ENCODE measurements at regions of chr5 and their contacts with region 1.

Region 1: GRCh38 chr5:26416911-26417310 is 621.5 kb downstream of the CDH9 start:
- DNase-seq: no peak
- H3K4me3 ChIP-seq: no peak overlapping the region
- H3K27ac ChIP-seq: no peak overlapping the region
- H3K4me1 ChIP-seq: no peaks in the 10 kb centered on the region
- H3K27me3 ChIP-seq: no peaks in the 10 kb centered on the region
- CTCF ChIP-seq: no peak
- POLR2A ChIP-seq: no peak

Region 2: GRCh38 chr5:25224316-25224982 is 1192.5 kb before region 1 on chr5:
- intact Hi-C with region 1: loop called (anchors 10 kb)
- DNase-seq: no peak
- H3K4me3 ChIP-seq: no peak overlapping the region
- H3K27ac ChIP-seq: no peak overlapping the region
- H3K4me1 ChIP-seq: no peaks in the 10 kb centered on the region
- H3K27me3 ChIP-seq: no peaks in the 10 kb centered on the region
- CTCF ChIP-seq: no peak
- POLR2A ChIP-seq: no peak

Region 3: GRCh38 chr5:26903469-26903868 is 486.6 kb after region 1 on chr5:
- intact Hi-C with region 1: no loop called
- DNase-seq: no peak
- H3K4me3 ChIP-seq: no peak overlapping the region
- H3K27ac ChIP-seq: no peak overlapping the region
- H3K4me1 ChIP-seq: no peaks in the 10 kb centered on the region
- H3K27me3 ChIP-seq: no peaks in the 10 kb centered on the region
- CTCF ChIP-seq: no peak
- POLR2A ChIP-seq: no peak

Region 4: GRCh38 chr5:27140831-27141230 is 723.9 kb after region 1 on chr5:
- intact Hi-C with region 1: loop called (anchors 5 kb)
- DNase-seq: no peak
- H3K4me3 ChIP-seq: no peak overlapping the region
- H3K27ac ChIP-seq: no peak overlapping the region
- H3K4me1 ChIP-seq: no peaks in the 10 kb centered on the region
- H3K27me3 ChIP-seq: no peaks in the 10 kb centered on the region
- CTCF ChIP-seq: no peak
- POLR2A ChIP-seq: no peak